Right ventricle myocardium superior (tissue), 1 donor: ENCODE measurements at regions of chr17 and their contacts with region 1.

Region 1: GRCh38 chr17:83051395-83052233 is 27.8 kb upstream of the METRNL start:
- DNase-seq: peak; percentile 98
- ATAC-seq: peak; percentile 97

Region 2: DNA sequence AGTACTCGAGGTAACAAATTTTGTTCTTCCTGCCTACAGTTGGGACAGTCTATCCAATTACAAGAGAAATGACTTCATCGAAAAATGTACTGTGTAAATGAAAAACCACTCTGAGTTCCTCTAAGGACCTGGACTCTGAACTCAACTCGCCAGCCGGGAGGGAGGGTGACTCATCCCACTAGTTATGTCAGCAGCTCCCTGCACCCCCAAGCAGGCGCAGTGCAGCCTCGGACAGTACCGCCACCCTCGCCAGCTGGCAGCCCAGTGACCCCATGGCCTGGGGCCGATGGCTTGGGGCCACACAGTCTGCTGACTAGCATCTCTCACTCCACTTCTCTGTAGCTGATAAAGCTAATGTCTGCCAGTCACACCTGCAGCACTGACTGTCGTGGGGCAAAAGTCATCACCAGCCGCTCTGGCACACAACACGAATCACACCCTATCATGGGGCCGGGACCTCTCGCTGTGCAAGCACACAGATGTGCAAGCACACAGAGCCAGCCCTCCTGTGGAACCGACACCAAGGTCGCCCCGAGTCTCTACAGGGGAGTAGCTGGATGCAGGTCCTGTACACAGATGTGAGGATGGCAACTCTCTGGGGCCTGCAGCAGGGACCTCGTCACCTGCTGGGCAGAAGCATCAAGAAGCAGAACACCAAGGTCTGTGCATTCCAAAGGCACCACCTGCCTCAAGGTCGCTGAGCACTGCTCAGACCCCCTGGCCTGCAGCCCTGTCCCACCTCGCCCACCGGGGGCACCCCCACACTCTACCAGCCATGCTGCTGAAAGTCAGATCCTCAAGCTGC is 783.8 kb before region 1 on chr17:
- intact Hi-C with region 1: loop called (anchors 10 kb)
- DNase-seq: peak; percentile 96
- ATAC-seq: peak; percentile 95

Region 3: DNA sequence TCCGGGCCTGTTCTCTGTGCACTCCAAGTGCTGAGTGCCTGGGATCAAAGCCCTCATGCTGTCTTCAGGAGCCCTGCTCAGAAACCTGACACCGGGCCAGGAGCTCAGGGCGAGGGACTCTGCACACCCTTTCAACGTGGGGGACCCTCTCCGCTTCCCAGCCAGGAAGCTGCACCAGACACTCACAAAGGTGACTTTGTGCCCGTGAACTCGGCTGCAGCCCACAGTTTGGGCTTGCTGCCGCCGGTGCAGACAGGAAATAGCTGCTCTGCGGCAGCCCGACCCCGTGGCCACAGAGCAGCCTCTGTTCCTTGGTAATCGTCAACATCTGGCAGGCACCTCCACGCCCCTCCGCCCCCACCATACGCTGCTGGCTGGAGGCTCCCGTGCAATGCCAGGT is 65.6 kb before region 1 on chr17:
- intact Hi-C with region 1: no loop called
- DNase-seq: no peak
- ATAC-seq: peak; percentile 41